Activated CD4-positive, alpha-beta memory T cell treated with anti-CD3 and anti-CD28 coated beads, Interleukin-2, amount 10 ng/mL, durations not matched to agents 7 days and 5 days (primary cell): ENCODE measurements at regions of chr10 and their contacts with region 1.

Region 1: GRCh38 chr10:30639946-30640786 is 10.6 kb upstream of the LYZL2 start:
- DNase-seq: no peak
- H3K4me3 Mint-ChIP-seq: no peak overlapping the region
- H3K27ac Mint-ChIP-seq: no peak overlapping the region
- H3K4me1 Mint-ChIP-seq: peaks cover 20% of the 10 kb centered on the region
- H3K27me3 Mint-ChIP-seq: peaks cover 36% of the 10 kb centered on the region

Region 2: GRCh38 chr10:30392564-30392990 is 247.6 kb before region 1 on chr10:
- CTCF ChIA-PET with region 1: interaction called, 12 read pairs
- POLR2A ChIA-PET with region 1: no interaction called
- DNase-seq: peak; percentile 80
- H3K4me3 Mint-ChIP-seq: no peak overlapping the region
- H3K27ac Mint-ChIP-seq: no peak overlapping the region
- H3K4me1 Mint-ChIP-seq: peaks cover 9% of the 10 kb centered on the region
- H3K27me3 Mint-ChIP-seq: peaks cover 39% of the 10 kb centered on the region

Region 3: DNA sequence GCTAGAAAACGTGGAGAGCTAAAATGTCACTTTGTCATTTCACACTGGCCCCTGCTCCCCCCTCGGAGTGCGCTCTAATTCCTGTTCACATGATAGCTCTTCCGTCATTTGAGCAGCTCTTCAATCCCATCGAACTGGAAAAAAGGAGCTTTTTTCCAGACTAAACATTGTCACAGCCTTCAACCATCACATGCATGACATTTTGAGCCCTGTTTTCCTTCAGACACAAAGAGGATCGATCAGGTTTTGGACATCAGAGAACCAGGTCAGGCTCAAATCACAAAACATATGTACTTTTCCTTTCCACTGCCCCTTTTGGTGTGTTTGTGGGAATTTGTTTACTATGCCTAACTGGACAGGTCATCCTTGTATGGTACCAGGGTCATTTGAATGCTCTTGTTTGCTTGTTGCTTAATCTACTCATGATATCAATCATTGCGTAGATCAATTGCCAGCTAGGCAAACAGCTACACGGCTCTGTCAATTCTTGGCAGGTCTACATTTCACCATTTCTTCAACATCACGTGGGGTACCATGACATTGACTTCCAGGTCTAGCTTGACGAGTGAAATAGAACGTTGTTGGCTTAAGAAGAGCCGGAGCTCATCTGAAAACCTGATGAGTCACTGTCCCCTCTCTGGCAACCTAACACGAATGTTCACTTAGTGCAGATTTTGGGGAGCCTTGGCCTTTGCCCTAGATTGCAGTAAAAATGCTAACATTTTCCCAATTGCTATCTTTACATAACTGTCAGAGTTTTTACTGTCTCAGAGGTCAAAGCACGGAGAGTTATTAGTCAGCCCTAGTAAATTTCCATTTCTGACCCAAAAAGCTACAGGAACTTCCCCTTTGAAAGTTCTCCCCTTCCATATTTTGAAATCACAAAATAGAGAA is 97.9 kb before region 1 on chr10:
- CTCF ChIA-PET with region 1: no interaction called
- POLR2A ChIA-PET with region 1: no interaction called
- DNase-seq: no peak
- H3K4me3 Mint-ChIP-seq: no peak overlapping the region
- H3K27ac Mint-ChIP-seq: no peak overlapping the region
- H3K4me1 Mint-ChIP-seq: peaks cover 17% of the 10 kb centered on the region
- H3K27me3 Mint-ChIP-seq: no peaks in the 10 kb centered on the region

Region 4: DNA sequence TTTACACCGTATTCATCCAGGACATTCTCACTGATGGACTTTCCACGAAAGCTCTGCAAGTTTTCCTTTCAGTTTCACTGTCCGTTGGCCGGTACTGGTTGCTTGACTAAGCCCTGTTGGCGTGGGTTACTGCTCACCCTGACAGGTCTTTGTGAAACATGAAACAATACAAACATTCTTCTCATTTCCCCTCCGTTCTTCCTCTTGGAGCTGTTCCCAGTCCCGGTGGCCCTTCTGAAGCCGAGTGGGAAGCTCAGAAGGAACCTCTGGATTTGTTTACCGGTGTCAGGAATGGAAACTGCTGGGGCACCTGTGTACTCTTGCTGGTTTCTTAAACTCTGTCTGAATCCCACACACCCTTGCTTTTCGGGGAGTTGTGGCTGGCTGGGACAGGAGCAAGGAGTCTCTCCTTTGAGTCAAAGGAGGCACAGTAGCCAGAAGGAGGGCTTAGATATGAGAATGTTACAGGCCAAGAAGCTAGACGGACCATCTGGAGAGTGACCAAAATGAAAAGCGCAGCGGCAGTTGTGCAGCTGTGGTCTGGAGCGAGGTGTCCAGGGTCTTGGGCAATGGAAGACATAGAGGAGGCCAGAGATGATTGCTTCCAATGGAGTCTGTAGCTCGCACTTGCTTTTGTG is 56.3 kb before region 1 on chr10:
- CTCF ChIA-PET with region 1: interaction called, 11 read pairs
- POLR2A ChIA-PET with region 1: no interaction called
- DNase-seq: peak; percentile 23
- H3K4me3 Mint-ChIP-seq: peak overlapping the region; percentile 57
- H3K27ac Mint-ChIP-seq: no peak overlapping the region
- H3K4me1 Mint-ChIP-seq: peaks cover 14% of the 10 kb centered on the region
- H3K27me3 Mint-ChIP-seq: peaks cover 8% of the 10 kb centered on the region

Region 5: DNA sequence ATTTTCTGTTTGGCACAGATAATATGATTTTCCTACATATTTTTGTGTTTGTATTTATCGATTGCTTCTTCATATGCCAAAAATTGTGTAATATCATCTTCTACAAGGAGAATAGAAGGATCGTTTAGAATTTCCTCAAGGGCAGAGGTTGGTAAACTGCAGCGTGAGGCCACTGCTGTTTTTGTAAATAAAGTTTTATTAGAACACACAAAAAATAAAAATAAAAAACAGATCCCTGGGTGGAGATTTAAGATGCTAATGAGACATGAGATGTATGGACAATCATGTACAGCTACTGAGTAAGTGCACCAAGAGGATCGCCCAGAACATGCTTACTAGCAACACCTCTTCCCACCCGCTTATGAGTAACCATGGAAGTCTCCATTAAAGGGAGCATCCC is 20.2 kb before region 1 on chr10:
- CTCF ChIA-PET with region 1: interaction called, 10 read pairs
- POLR2A ChIA-PET with region 1: no interaction called
- DNase-seq: no peak
- H3K4me3 Mint-ChIP-seq: no peak overlapping the region
- H3K27ac Mint-ChIP-seq: no peak overlapping the region
- H3K4me1 Mint-ChIP-seq: peaks cover 7% of the 10 kb centered on the region
- H3K27me3 Mint-ChIP-seq: peaks cover 22% of the 10 kb centered on the region

Region 6: GRCh38 chr10:30662814-30663213 is 22.6 kb after region 1 on chr10:
- CTCF ChIA-PET with region 1: interaction called, 10 read pairs
- POLR2A ChIA-PET with region 1: no interaction called
- DNase-seq: no peak
- H3K4me3 Mint-ChIP-seq: no peak overlapping the region
- H3K27ac Mint-ChIP-seq: no peak overlapping the region
- H3K4me1 Mint-ChIP-seq: peaks cover 3% of the 10 kb centered on the region
- H3K27me3 Mint-ChIP-seq: peaks cover 38% of the 10 kb centered on the region

Region 7: DNA sequence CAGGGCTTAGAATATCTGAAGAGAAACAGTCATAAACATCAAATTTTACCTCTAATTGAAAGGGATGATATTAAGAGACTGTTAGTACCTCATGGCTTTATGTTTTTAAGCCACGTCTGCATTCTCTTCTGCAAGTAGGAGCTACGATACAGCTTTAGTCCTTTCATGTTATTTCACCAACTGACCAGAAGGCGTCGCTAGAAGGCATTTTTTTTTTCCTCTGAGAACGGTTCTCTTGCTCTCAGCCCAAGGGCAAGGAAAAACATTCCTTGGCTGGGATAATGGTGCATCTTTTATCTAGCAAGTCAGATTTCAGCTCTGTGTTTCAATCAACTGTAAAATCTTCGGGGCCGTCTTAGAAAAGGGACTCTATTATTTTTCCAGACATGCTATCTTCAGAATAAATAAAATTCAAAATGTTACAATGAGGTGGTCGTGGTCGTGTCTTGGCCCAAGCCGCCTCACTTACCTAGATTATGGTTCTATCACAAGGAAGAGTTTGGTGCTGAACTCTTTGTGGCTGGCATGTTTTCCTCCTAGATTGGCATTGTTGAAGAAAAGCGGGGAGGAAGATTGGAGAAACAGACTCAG is 31.0 kb after region 1 on chr10:
- CTCF ChIA-PET with region 1: interaction called, 11 read pairs
- POLR2A ChIA-PET with region 1: no interaction called
- DNase-seq: peak; percentile 28
- H3K4me3 Mint-ChIP-seq: peak overlapping the region; percentile 46
- H3K27ac Mint-ChIP-seq: no peak overlapping the region
- H3K4me1 Mint-ChIP-seq: peaks cover 34% of the 10 kb centered on the region
- H3K27me3 Mint-ChIP-seq: peaks cover 7% of the 10 kb centered on the region

Region 8: DNA sequence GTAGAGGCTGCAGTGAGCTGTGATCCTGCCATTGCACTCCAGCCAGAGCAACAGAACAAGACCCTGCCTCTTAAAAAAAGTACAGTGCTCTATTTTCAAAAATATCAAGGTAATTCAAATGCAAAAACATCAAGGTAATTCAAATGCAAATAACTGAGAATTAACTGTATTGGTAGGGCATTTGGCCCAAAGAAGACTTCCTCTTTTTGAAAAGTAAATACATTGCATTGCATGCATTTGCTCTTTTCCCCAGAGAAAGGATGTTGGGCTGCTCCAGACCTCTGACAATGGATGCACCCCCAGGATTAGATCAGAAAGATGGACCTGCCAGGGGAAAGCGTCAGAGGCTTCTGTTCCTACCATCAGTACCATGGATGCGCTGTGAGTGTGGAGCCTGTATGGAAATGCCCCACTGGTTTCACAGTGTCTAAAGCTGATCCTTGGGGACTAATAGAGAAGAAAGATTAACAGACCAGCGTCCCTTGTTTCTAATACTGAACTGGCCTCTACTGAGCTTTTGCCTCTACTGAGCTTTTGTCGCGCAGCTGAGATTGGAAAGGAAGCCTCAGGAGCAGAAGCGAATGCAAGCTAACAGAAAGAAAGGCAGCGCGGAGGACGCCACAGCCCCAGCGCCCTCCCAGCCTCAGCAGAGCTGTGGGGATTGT is 82.9 kb after region 1 on chr10:
- CTCF ChIA-PET with region 1: interaction called, 30 read pairs
- POLR2A ChIA-PET with region 1: no interaction called
- DNase-seq: no peak
- H3K4me3 Mint-ChIP-seq: no peak overlapping the region
- H3K27ac Mint-ChIP-seq: no peak overlapping the region
- H3K4me1 Mint-ChIP-seq: peaks cover 34% of the 10 kb centered on the region
- H3K27me3 Mint-ChIP-seq: no peaks in the 10 kb centered on the region